ENCODE measurements at regions of chr12 and their contacts with region 1.

Region 1: DNA sequence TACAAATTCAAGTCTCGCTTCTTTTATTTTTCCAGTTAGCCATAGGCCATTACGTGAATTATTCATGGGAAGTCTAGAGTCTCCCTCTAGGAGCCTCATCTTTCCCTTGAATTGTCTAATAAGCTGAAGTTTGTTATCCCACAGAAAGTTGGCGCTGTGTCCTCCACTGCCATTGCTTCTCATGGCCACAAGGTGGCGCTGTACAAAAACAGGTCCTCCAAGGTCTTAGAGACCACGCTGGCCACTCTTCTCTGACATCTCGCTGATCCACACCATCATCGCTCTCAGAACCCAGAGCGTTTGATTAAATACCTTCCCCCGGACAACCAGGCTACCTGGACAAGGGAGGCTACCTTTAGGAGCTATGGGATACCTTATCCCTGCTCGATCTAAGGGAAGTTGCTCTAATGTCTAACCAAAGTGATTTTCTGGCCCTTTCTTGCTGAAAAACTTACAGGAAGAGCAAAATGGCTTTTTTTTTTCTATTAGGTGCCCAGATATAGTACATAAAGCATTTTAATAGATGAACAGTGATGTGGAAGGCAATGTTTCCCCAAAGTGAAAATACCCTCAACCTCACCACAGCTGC is 110.0 kb downstream of the CCDC60 start:
- DNase-seq: peak; percentile 84
- H3K4me3 Mint-ChIP-seq: no peak overlapping the region
- H3K27ac Mint-ChIP-seq: no peak overlapping the region
- H3K4me1 Mint-ChIP-seq: peaks cover 2% of the 10 kb centered on the region
- H3K27me3 Mint-ChIP-seq: peaks cover 4% of the 10 kb centered on the region

Region 2: DNA sequence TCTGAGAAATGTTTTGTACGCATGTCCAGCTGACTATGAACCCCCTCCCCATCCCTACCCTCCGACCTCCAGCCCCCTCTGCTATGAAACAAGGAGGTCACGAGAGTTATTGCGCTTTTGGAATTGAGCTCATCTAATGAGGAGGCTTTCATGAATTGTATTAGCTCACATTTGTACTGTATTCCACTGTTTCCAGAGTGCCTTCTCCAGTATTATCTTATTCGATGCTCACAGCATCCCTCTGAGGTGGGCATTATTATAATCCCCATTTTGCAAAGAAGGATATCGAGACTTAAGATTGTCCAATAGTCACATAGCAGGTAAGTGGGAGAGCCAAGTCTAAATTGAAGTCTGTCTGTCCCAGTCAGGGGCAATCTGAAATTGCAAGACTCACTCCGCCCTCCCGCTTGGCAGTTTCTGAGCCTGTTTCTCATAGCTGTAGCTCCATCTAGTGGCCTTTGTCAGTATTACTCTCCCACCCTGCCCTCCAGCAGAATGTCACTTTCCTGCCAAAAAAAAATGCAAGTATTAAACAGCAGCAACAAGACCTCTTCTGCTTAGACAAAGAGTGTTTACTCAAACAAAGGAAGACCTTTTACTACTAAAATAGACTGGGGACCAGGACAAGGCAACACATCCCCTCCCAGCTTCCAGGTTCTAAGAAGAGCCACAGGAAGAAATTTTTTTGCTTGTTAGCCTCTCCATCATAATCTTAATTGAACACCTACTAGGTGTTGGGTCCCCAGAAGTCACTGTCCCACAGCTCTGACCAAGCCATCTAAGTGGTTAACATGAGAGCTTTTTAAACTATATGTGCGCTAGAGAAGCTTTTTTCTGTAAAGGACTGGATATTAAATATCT is 100.4 kb after region 1 on chr12:
- intact Hi-C with region 1: loop called (anchors 2 kb)
- DNase-seq: peak; percentile 86
- H3K4me3 Mint-ChIP-seq: no peak overlapping the region
- H3K27ac Mint-ChIP-seq: no peak overlapping the region
- H3K4me1 Mint-ChIP-seq: no peaks in the 10 kb centered on the region
- H3K27me3 Mint-ChIP-seq: peaks cover 5% of the 10 kb centered on the region

Region 3: DNA sequence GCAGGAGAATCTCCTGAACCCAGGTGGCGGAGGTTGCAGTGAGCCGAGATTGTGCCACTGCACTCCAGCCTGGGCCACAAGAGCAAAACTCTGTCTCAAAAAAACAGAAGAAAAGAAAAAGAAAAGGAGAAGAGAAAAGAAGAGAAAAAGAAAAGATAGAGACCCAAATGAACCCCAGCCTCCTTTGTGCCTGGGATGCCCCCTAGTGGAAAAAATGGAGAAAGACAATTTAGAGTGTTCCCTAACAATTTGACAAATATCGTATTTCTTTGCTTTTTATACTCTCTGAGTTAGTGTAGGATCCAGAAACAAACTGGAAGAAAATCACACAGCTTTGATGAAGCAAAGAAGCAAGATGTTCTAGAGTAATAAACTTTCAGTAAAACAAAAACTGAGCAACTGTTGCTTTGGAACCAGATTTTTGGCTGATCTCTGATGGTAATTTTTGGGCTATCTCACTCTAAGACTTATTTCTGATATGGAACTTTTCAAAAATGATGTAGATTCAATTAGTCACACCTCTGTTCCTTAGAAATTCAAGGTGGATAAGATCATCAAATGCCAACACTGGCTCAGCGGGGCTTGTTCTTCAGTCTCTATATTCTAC is 204.8 kb after region 1 on chr12:
- intact Hi-C with region 1: loop called (anchors 2 kb)
- DNase-seq: no peak
- H3K4me3 Mint-ChIP-seq: no peak overlapping the region
- H3K27ac Mint-ChIP-seq: no peak overlapping the region
- H3K4me1 Mint-ChIP-seq: no peaks in the 10 kb centered on the region
- H3K27me3 Mint-ChIP-seq: peaks cover 3% of the 10 kb centered on the region

Region 4: DNA sequence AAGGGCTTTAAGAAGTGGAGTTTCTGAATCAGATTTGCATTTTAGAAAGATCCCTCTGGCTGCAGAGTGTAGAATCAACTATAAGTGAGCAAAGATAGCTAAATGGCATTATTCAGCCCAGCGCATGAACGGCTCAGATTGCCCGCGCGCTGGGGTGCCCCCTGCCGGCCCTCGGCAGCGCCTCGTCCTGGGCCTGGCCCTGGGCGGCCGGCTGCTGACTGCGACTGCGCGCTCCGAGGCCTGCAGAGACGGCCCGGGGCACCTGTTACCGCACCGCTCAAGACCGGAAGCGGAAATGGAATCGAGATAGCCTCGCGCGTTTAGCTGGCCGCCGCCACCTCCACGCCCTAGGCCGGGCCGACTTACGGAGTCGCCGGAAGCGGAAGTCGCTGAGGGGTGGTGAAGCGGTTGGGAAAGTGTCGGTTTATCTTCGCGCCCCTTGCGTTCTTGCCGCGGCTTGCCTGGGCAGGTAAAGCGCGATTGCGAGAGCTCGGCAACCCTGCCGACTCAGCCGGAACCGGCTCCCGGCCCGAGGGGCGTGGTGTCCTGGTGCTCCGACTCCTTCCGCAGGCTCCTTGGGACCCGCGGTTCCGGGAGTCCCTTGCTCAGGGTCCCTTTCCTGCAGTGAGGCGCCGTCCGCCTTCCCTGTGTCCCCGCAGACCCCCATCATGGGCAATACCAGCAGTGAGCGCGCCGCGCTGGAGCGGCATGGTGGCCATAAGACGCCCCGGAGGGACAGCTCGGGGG is 223.2 kb after region 1 on chr12 and contains the start of gene PRKAB1:
- intact Hi-C with region 1: loop called (anchors 5 kb)
- DNase-seq: peak; percentile 99
- H3K4me3 Mint-ChIP-seq: peak within 1 kb of the TSS; percentile 88
- H3K27ac Mint-ChIP-seq: peak within 1 kb of the TSS; percentile 87
- H3K4me1 Mint-ChIP-seq: peaks cover 38% of the 10 kb centered on the region
- H3K27me3 Mint-ChIP-seq: peaks cover under 1% of the 10 kb centered on the region
- total RNA-seq, gene PRKAB1: 27.5 and 33.3 TPM in 2 replicates

Measured in activated CD4-positive, alpha-beta T cell treated with anti-CD3 and anti-CD28 coated beads, Interleukin-2, amount 10 ng/mL, durations not matched to agents 24 days and 14 days (primary cell).